PC-9 (cell line): ENCODE measurements at regions of chr7 and their contacts with region 1.

Region 1: DNA sequence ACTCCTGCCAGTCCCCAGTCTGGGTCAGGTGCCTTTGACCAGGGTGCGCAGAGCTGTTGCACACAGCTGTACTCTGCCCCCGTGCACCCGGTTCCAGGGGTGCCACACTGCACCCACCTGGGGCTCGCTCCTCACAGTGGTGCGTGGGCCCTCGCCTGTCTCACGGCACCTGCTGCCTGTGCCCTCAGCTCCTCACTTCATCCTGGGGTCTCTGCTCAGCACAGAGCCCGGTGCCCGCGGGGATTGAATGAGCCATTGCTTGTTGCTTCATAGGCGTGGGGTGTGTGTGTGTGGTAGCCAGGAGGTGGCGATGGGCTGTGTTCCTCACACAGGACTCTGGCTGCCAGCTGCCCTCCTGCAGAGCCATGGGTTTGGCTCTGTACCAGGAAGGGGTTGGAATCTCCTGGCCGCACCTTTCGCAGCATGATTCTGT is 18.5 kb downstream of the EIF3B start:
- DNase-seq: no peak
- H3K4me3 ChIP-seq: no peak overlapping the region
- H3K27ac ChIP-seq: no peak overlapping the region
- H3K4me1 ChIP-seq: no peaks in the 10 kb centered on the region
- H3K27me3 ChIP-seq: no peaks in the 10 kb centered on the region
- CTCF ChIP-seq: no peak

Region 2: GRCh38 chr7:992709-993607 is 1380.2 kb before region 1 on chr7:
- CTCF ChIA-PET with region 1: no interaction called
- POLR2A ChIA-PET with region 1: no interaction called
- intact Hi-C with region 1: no loop called
- DNase-seq: peak; percentile 85 to 97
- H3K4me3 ChIP-seq: no peak overlapping the region
- H3K27ac ChIP-seq: no peak overlapping the region
- H3K4me1 ChIP-seq: no peaks in the 10 kb centered on the region
- H3K27me3 ChIP-seq: no peaks in the 10 kb centered on the region
- CTCF ChIP-seq: peak; percentile 99

Region 3: GRCh38 chr7:1702652-1703051 is 670.5 kb before region 1 on chr7:
- CTCF ChIA-PET with region 1: interaction called, 16 read pairs
- POLR2A ChIA-PET with region 1: no interaction called
- intact Hi-C with region 1: no loop called
- DNase-seq: no peak
- H3K4me3 ChIP-seq: no peak overlapping the region
- H3K27ac ChIP-seq: no peak overlapping the region
- H3K4me1 ChIP-seq: no peaks in the 10 kb centered on the region
- H3K27me3 ChIP-seq: peaks cover 84% of the 10 kb centered on the region
- CTCF ChIP-seq: no peak

Region 4: DNA sequence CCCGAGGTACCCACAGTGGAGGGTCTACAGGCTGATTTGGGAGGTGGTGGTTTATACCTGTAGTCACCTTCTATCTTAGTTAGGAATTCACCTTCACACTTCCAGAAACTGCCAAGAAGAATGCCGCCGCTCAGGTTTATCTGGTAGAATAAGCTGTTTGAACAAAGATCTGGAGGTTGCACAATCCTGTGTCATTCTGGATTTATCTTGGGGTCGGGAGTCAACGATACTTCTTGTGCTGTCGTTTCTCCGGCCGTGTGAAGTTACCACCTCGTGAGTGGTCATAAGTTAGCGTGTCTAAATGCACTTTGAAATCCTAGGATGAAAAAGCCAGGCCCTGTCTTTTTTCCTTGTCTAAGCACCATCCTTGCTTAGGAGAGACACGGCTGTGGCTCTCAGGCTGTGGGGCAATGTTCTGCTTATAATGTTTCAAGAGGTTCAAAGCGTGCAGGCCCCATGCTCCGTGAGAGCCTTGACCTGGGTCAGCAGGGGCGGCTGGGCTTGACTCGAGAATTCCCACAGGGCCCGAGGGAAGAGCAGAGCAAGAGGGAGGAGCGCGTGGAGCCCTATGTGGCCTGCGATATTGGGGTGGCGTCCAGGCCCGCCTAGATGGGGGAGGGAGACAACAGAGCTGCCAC is 67.6 kb after region 1 on chr7:
- CTCF ChIA-PET with region 1: interaction called, 7 read pairs
- POLR2A ChIA-PET with region 1: interaction called, 10 read pairs
- intact Hi-C with region 1: no loop called
- DNase-seq: peak; percentile 82 to 98
- H3K4me3 ChIP-seq: peak overlapping the region; percentile 32; the same call in 1 of the 2 replicates
- H3K27ac ChIP-seq: peak overlapping the region; percentile 86
- H3K4me1 ChIP-seq: peaks cover 56% of the 10 kb centered on the region
- H3K27me3 ChIP-seq: no peaks in the 10 kb centered on the region
- CTCF ChIP-seq: no peak

Region 5: DNA sequence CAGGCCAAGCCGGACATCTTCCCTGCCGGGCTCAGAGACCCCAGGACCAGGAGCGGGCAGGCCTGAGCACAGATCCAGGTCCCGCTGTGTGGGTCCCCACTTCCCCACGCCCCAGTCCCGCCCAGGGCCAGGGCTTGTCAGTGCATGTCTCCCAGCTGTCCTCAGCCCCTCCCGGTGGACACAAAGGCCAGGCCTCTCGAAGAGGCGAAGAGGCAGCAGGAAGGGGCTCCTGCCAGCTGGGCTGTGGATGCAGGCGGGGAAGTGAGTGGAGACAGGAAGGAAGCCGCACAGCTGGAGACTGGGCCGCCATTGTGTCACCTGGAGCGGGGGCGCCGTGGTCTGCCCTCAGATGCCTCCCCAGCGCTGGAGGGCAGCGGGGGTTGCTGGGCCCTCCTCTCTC is 98.3 kb after region 1 on chr7:
- CTCF ChIA-PET with region 1: no interaction called
- POLR2A ChIA-PET with region 1: interaction called, 11 read pairs
- intact Hi-C with region 1: no loop called
- DNase-seq: no peak
- H3K4me3 ChIP-seq: no peak overlapping the region
- H3K27ac ChIP-seq: no peak overlapping the region
- H3K4me1 ChIP-seq: peaks cover 5% of the 10 kb centered on the region
- H3K27me3 ChIP-seq: no peaks in the 10 kb centered on the region
- CTCF ChIP-seq: no peak